WTC11 (cell line): ENCODE measurements at regions of chr5 and their contacts with region 1.

Region 1: DNA sequence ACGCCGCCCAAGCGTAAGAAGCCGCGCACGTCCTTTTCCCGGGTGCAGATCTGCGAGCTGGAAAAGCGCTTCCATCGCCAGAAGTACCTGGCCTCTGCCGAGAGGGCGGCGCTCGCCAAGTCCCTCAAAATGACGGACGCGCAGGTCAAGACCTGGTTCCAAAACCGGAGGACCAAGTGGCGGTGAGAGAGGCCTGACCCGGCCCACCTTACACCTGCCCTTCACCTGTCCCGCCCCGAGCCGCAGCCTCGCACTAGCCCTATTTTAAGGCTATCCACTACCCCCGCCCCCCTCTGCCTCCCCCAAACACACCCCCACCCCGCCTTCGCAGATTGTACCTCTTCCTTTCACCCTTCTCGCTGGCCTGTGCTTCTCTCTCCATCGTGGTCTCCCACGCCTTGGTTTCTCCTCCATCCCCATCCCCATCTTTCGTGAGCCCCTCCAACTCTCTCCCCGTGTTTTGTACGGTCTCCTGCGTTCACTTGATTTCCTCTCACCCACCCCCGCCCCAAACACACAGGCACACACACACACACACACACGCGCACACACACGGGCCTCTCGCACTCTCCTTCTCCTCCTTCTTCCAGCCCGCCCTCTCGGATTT is 1.3 kb downstream of the TLX3 start:
- DNase-seq: peak; percentile 80
- ATAC-seq: no peak; the same call in 1 of the 2 replicates
- H3K4me3 Mint-ChIP-seq: peak overlapping the region; percentile 54
- H3K27ac Mint-ChIP-seq: no peak overlapping the region
- H3K4me1 Mint-ChIP-seq: peaks cover 43% of the 10 kb centered on the region
- H3K27me3 Mint-ChIP-seq: peaks cover 98% of the 10 kb centered on the region
- CTCF ChIP-seq: peak; percentile 66

Region 2: DNA sequence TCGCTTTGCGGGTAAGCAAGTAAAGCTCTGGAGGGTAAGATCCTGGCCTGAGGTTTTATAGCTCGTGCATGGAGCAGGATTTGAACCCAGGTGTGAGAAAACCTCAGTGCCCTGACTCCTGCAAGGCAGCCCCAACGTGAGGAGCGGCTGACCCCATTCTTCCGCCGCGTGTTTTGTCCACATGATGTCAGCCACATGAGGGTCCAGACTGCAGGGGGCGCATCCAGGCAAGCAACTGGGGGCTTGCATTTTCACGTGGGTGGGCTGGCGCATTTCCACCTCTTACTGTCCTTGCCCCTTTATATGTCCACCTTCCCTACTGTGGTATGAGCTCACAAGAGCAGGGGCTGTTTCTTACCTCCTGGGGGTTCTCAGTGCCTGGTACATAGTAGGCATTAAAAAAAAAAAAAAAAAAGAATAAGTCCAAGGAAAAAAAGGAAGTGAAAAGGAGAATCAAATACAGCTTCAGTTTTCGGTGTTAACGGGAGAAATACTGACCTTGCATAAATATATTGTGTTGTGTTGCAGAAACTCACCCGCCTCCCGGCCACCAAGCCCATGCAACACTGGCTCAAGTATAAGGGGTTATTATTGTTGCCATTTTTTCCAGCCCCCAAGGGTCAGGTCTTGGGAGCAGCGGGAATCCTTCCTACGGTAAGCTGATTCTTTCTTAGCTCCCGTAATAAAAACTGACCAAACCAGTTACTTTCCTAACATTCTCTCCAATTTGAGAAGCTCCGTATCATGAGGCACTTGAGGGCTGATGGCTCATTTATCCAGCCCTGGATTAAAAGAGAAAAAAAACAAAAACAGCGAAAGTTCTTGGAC is 13.7 kb after region 1 on chr5:
- CTCF ChIA-PET with region 1: interaction called, 40 read pairs
- POLR2A ChIA-PET with region 1: no interaction called
- DNase-seq: no peak
- ATAC-seq: peak; percentile 32; the same call in 1 of the 2 replicates
- H3K4me3 Mint-ChIP-seq: no peak overlapping the region
- H3K27ac Mint-ChIP-seq: no peak overlapping the region
- H3K4me1 Mint-ChIP-seq: peaks cover 33% of the 10 kb centered on the region
- H3K27me3 Mint-ChIP-seq: peaks cover 89% of the 10 kb centered on the region
- CTCF ChIP-seq: no peak

Region 3: GRCh38 chr5:171336521-171337209 is 26.4 kb after region 1 on chr5:
- CTCF ChIA-PET with region 1: interaction called, 14 read pairs
- POLR2A ChIA-PET with region 1: no interaction called
- DNase-seq: peak; percentile 51
- ATAC-seq: peak; percentile 91
- H3K4me3 Mint-ChIP-seq: peak overlapping the region; percentile 59
- H3K27ac Mint-ChIP-seq: no peak overlapping the region
- H3K4me1 Mint-ChIP-seq: peaks cover 12% of the 10 kb centered on the region
- H3K27me3 Mint-ChIP-seq: peaks cover 59% of the 10 kb centered on the region
- CTCF ChIP-seq: 0 out of 2 replicates have a peak, but pooled peaks have one; percentile 20